Activated naive CD4-positive, alpha-beta T cell treated with anti-CD3 and anti-CD28 coated beads for 36 hours (primary cell): ENCODE measurements at regions of chr11 and their contacts with region 1.

Region 1: GRCh38 chr11:10653926-10654810 is 39.4 kb downstream of the IRAG1 start:
- DNase-seq: peak; percentile 48
- H3K4me3 Mint-ChIP-seq: no peak overlapping the region
- H3K27ac Mint-ChIP-seq: no peak overlapping the region
- H3K4me1 Mint-ChIP-seq: peaks cover 5% of the 10 kb centered on the region
- H3K27me3 Mint-ChIP-seq: no peaks in the 10 kb centered on the region

Region 2: GRCh38 chr11:10405855-10406592 is 248.1 kb before region 1 on chr11:
- CTCF ChIA-PET with region 1: interaction called, 22 read pairs
- intact Hi-C with region 1: loop called (anchors 1 kb)
- DNase-seq: peak; percentile 61
- H3K4me3 Mint-ChIP-seq: no peak overlapping the region
- H3K27ac Mint-ChIP-seq: no peak overlapping the region
- H3K4me1 Mint-ChIP-seq: peaks cover 15% of the 10 kb centered on the region
- H3K27me3 Mint-ChIP-seq: no peaks in the 10 kb centered on the region

Region 3: DNA sequence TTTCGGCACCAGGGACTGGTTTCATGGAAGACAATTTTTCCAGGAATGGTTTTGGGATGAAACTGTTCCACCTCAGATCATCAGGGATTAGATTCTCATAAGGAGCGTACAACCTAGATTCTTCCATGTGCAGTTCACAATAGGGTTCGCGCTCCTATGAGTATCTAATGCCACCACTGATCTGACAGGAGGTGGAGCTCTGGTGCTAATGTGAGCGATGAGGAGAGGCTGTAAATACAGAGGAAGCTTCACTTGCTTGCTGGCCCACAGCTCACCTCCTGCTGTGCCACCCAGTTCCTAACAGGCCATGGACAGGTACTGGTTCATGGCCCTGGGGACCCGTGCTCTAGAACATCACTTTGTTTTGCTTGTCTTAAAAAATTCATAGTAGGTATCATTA is 240.9 kb before region 1 on chr11:
- CTCF ChIA-PET with region 1: interaction called, 52 read pairs
- intact Hi-C with region 1: loop called (anchors 1 kb)
- DNase-seq: peak; percentile 71
- H3K4me3 Mint-ChIP-seq: no peak overlapping the region
- H3K27ac Mint-ChIP-seq: no peak overlapping the region
- H3K4me1 Mint-ChIP-seq: peaks cover 26% of the 10 kb centered on the region
- H3K27me3 Mint-ChIP-seq: no peaks in the 10 kb centered on the region

Region 4: GRCh38 chr11:10514210-10514609 is 140.0 kb before region 1 on chr11:
- CTCF ChIA-PET with region 1: interaction called, 4 read pairs
- intact Hi-C with region 1: loop called (anchors 5 kb)
- DNase-seq: no peak
- H3K4me3 Mint-ChIP-seq: no peak overlapping the region
- H3K27ac Mint-ChIP-seq: no peak overlapping the region
- H3K4me1 Mint-ChIP-seq: no peaks in the 10 kb centered on the region
- H3K27me3 Mint-ChIP-seq: no peaks in the 10 kb centered on the region

Region 5: GRCh38 chr11:10564696-10565318 is 89.4 kb before region 1 on chr11:
- CTCF ChIA-PET with region 1: interaction called, 4 read pairs
- intact Hi-C with region 1: loop called (anchors 1 kb)
- DNase-seq: no peak
- H3K4me3 Mint-ChIP-seq: no peak overlapping the region
- H3K27ac Mint-ChIP-seq: no peak overlapping the region
- H3K4me1 Mint-ChIP-seq: no peaks in the 10 kb centered on the region
- H3K27me3 Mint-ChIP-seq: no peaks in the 10 kb centered on the region

Region 6: GRCh38 chr11:10623797-10624761 is 30.1 kb before region 1 on chr11:
- CTCF ChIA-PET with region 1: interaction called, 15 read pairs
- intact Hi-C with region 1: no loop called
- DNase-seq: no peak
- H3K4me3 Mint-ChIP-seq: no peak overlapping the region
- H3K27ac Mint-ChIP-seq: peak overlapping the region; percentile 25
- H3K4me1 Mint-ChIP-seq: peaks cover 22% of the 10 kb centered on the region
- H3K27me3 Mint-ChIP-seq: no peaks in the 10 kb centered on the region

Region 7: DNA sequence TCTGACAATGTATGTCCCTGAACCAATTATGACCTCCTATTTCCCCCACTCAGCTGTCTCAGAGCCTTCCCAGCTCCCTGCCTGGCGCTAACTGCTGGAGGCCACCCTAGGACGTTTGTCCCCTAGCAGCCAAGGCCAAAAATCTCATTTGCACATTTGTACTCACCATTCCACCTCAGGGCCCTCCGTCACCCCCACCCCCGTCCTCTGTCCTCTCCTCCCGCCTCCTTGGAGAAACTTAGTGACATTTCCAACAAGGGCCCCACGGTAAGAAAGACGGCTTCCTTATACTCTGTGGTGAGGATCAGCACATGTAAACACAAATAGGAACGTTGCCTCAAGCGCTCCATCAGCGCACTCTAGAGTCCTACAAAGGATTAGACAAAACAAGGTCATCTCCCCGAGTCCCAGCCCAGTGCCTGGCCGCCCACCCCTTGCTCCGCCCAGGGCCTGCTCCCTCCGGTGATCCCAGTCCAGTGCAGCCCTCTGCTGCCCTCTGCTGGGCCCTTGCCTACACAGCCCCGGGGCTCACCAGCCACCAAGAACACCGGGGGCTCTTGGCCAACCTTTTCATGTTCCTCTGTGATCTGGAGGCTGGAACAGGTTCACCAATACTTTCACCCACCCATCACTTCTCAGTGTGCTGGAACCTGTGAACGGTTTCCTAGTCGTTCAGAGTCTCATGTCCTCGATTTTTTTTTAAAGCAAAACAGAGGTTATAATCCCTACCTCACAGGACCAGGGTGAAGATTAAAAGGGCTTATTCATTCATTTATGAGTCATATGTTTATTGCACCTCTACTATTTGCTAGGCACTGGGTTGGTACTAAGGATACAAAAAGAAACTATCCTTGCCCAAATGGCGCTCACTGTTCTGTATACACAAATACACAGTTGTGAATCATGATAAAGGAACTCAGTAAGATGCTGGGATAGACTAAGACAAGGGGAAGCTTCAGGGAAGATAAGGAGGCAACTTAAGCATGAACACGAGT is 81.6 kb after region 1 on chr11:
- CTCF ChIA-PET with region 1: interaction called, 4 read pairs
- intact Hi-C with region 1: loop called (anchors 1 kb)
- DNase-seq: peak; percentile 90
- H3K4me3 Mint-ChIP-seq: peak overlapping the region; percentile 54
- H3K27ac Mint-ChIP-seq: no peak overlapping the region
- H3K4me1 Mint-ChIP-seq: peaks cover 5% of the 10 kb centered on the region
- H3K27me3 Mint-ChIP-seq: peaks cover 6% of the 10 kb centered on the region